ENCODE measurements at regions of chr3 and their contacts with region 1.

Region 1: DNA sequence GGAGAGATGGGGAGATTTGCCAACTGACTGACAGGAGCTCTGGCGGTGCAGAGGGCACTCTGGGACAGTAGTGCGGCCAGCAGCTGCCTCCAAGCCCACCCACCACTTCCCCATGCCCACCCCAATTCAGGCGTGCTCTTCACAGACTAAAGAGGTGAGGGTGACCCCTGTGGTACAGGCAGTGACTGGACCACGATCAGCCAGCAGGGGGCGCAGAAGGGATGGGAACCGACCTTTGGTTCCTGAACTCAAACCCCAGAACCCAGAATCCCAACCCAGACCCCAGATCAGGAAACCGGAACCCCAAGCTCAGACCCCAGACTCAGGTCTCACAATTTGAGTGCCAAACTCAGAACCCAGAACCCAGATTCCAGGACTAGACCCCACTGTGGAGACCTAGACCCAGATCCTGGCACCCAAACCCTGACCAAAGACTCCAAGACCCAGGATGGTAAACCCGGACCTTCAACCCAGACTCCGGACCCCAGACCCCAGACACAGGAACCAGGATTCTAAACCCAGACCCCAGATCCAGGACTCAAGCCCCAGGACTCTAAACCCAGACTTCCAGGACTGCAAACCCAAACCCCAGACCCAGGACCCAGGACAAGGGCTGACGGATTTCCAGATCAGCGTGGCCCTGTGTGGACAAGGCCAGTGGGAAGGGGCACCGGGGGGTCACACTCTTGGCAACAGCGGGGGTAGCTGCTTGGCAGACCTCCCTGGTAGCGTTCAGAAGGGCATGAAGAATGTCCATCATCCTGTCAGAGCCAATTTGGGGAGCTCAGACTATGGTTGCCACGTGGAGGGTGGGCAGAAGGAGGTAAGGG is 3.7 kb upstream of the MYL3 start:
- DNase-seq: no peak
- ATAC-seq: peak; percentile 86
- H3K4me3 ChIP-seq: no peak overlapping the region
- H3K27ac ChIP-seq: no peak overlapping the region
- H3K4me1 ChIP-seq: no peaks in the 10 kb centered on the region
- H3K27me3 ChIP-seq: no peaks in the 10 kb centered on the region
- CTCF ChIP-seq: peak; percentile 93 to 95 (median 94)
- POLR2A ChIP-seq: no peak
- RAD21 ChIP-seq: peak; percentile 81

Region 2: DNA sequence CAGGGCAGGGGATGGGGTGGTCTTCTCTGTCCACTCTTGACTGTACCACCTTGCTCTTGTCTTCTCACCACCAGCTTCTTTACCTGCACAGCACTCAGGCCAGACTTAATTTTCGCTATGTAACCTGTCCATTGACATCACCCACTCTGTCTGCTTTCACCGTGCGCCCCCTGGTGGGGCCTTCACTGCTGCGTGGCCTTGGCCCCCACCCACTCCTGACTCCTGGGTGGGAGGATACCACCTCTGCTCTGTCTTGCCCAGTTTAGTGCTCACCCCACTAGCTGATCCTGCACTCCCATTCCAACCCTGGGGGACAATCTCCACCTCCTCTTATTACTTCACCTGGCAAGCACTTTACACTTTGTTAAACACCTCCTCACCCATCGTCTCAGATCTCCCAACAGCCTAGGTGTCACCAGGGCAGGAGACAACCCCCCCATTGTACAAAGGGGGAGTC is 28.3 kb after region 1 on chr3:
- CTCF ChIA-PET with region 1: interaction called, 7 read pairs
- POLR2A ChIA-PET with region 1: no interaction called
- RAD21 ChIA-PET with region 1: interaction called in 1 of 2 experiments, 3 read pairs
- intact Hi-C with region 1: loop called (anchors 1 kb)
- DNase-seq: peak; percentile 37
- ATAC-seq: peak; percentile 67
- H3K4me3 ChIP-seq: no peak overlapping the region
- H3K27ac ChIP-seq: no peak overlapping the region
- H3K4me1 ChIP-seq: peaks cover 0 to 13% of the 10 kb centered on the region in 2 experiments; a peak in 2 of 4 replicates
- H3K27me3 ChIP-seq: no peaks in the 10 kb centered on the region
- CTCF ChIP-seq: peak; percentile 90 to 95 (median 92)
- POLR2A ChIP-seq: no peak
- RAD21 ChIP-seq: peak; percentile 88

Region 3: DNA sequence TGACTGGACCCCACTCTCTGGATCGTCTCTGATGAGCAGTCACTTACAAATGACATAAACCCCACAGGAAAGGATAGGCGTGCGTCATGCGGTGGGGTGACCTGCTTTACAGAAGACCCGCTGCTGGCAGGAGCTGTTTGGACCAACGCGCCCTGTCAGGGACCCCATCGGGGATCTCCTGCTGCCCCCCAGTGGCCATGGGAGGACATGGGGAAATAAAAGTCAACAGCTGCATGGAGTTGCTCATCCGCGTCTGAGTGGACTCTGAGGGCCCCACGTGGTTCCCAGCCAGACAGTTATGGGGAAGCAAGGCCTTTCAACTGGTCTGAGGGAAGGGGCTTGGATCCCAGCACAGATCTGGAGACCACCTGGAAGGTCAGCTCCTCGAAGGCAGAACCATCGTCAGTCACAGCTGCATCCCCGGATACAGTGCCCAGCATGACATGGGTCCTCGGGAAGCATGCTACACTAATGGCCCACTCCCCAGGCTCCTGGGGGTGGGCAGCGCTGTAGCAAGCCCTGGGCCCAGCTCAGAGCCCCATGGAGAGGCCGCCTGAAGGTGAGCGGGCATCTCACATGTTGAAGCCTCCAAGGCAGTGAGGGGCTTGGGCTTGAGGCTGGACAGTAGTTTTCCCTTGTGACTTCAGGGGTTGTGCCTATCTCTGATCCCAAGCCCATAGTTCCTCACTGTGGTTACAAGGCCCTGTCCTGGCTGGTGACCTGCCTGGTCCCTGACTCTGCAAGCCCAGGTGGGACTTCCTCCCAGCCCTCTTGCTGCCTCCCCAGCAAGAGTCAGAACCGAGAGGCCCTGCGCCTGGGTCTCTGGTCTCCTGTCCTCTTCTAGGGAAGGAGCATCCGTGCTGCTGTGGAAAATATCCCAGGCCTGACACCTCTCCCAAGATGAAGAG is 42.9 kb after region 1 on chr3:
- CTCF ChIA-PET with region 1: interaction called, 5 read pairs
- POLR2A ChIA-PET with region 1: no interaction called
- RAD21 ChIA-PET with region 1: no interaction called
- intact Hi-C with region 1: loop called (anchors 2 kb)
- DNase-seq: peak; percentile 51
- ATAC-seq: peak; percentile 92
- H3K4me3 ChIP-seq: no peak overlapping the region
- H3K27ac ChIP-seq: no peak overlapping the region
- H3K4me1 ChIP-seq: peaks cover 3 to 17% of the 10 kb centered on the region in 2 experiments; a peak in 3 of 4 replicates
- H3K27me3 ChIP-seq: no peaks in the 10 kb centered on the region
- CTCF ChIP-seq: peak; percentile 84 to 95 (median 89)
- POLR2A ChIP-seq: no peak
- RAD21 ChIP-seq: peak; percentile 95

Region 4: GRCh38 chr3:47370887-47371697 is 504.2 kb after region 1 on chr3:
- CTCF ChIA-PET with region 1: no interaction called
- POLR2A ChIA-PET with region 1: no interaction called
- RAD21 ChIA-PET with region 1: no interaction called
- intact Hi-C with region 1: loop called (anchors 5 kb)
- DNase-seq: no peak
- ATAC-seq: peak; percentile 79
- H3K4me3 ChIP-seq: no peak overlapping the region
- H3K27ac ChIP-seq: no peak overlapping the region
- H3K4me1 ChIP-seq: no peaks in the 10 kb centered on the region
- H3K27me3 ChIP-seq: no peaks in the 10 kb centered on the region
- CTCF ChIP-seq: no peak
- POLR2A ChIP-seq: no peak
- RAD21 ChIP-seq: peak; percentile 51

Measured in HCT116 (cell line).